ENCODE measurements at regions of chr1 and their contacts with region 1.

Region 1: GRCh38 chr1:147890177-147890790 is 12.3 kb upstream of the GJA8 start:
- DNase-seq: peak; percentile 48
- ATAC-seq: peak; percentile 97
- H3K4me3 ChIP-seq: no peak overlapping the region
- H3K27ac ChIP-seq: no peak overlapping the region
- H3K4me1 ChIP-seq: peaks cover 3 to 6% of the 10 kb centered on the region in 2 experiments; a peak in 2 of 4 replicates
- H3K27me3 ChIP-seq: no peaks in the 10 kb centered on the region
- CTCF ChIP-seq: peak; percentile 68 to 84 (median 81)
- POLR2A ChIP-seq: no peak
- RAD21 ChIP-seq: peak; percentile 92

Region 2: DNA sequence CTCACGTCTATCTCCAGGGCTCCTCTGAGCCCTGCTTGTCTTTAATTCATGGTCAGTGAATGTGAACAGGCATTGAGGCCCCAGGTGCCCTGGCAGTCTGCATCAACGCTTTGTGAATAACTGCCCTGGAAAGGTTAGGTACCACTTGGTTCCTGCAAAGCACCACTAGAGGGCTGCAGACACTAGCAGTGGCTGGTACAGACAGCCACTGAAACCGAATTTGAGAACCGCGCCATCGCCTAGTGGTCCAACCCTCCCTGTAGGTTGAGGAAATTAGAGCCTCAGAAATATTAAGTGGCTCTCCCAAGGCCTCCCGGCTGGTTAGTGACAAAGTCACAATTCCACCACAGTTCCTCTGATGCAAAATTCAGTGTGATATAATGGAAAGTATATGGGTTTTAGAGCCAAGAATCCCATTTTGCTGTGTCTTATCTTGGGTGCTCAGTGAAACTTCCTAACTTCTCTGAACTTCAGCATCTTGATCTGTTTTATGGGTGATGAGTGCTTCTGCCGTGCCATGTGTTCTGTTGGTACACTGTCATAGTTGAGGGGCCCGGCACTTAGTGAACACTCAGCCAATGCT is 395.2 kb before region 1 on chr1:
- CTCF ChIA-PET with region 1: interaction called, 11 read pairs
- POLR2A ChIA-PET with region 1: no interaction called
- RAD21 ChIA-PET with region 1: interaction called in 1 of 2 experiments, 4 read pairs
- intact Hi-C with region 1: loop called (anchors 1 kb)
- DNase-seq: peak; percentile 72
- ATAC-seq: peak; percentile 99
- H3K4me3 ChIP-seq: no peak overlapping the region
- H3K27ac ChIP-seq: no peak overlapping the region
- H3K4me1 ChIP-seq: no peaks in the 10 kb centered on the region; a peak in 1 of 4 replicates
- H3K27me3 ChIP-seq: no peaks in the 10 kb centered on the region
- CTCF ChIP-seq: peak; percentile 83 to 95 (median 94)
- POLR2A ChIP-seq: no peak
- RAD21 ChIP-seq: peak; percentile 94

Region 3: DNA sequence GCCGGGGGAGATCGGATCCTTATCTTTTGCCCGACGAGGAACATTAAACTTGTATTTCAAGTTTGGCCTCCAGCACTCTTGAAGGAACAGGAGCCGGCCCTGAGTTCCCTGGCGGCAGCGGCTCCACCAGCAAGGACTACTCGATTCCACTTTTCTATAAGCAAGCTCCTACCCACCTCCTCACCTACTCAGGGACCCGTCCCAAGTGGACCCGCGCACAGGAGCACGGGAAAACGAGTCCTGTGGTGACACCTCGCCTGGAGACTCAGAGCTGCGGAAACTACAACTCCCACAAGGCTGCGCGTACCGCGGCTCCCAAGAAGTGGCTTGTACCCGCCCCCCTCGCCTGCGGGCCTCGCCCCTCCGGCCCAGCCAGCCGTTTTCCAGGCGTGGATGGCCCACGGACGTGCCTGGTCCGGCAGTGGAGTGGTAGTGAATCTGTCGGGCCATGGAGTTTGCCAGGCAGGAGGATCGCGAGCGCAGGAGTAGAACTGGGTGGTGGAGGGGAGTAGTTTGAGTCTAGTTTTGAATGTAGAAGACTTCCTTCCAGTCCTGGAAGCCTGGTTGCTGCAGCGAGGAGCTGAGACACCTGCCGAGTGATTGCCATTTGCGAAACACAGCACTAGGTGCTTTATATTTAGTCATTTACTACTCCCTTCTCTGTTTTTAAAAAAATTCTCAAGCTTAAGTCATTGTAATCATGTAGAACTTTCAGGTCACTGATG is 219.8 kb before region 1 on chr1 and contains the start of gene ACP6:
- CTCF ChIA-PET with region 1: interaction called, 11 read pairs
- POLR2A ChIA-PET with region 1: no interaction called
- RAD21 ChIA-PET with region 1: interaction called in 1 of 2 experiments, 5 read pairs
- intact Hi-C with region 1: no loop called
- DNase-seq: peak; percentile 93
- ATAC-seq: peak; percentile 94
- H3K4me3 ChIP-seq: peak within 1 kb of the TSS; percentile 66 to 80
- H3K27ac ChIP-seq: peak within 1 kb of the TSS; percentile 84
- H3K4me1 ChIP-seq: peaks cover 3 to 11% of the 10 kb centered on the region in 2 experiments; a peak in 2 of 4 replicates
- H3K27me3 ChIP-seq: no peaks in the 10 kb centered on the region
- CTCF ChIP-seq: no peak
- POLR2A ChIP-seq: peak; percentile 81
- RAD21 ChIP-seq: no peak
- total RNA-seq, gene ACP6: 26.4 TPM

Region 4: DNA sequence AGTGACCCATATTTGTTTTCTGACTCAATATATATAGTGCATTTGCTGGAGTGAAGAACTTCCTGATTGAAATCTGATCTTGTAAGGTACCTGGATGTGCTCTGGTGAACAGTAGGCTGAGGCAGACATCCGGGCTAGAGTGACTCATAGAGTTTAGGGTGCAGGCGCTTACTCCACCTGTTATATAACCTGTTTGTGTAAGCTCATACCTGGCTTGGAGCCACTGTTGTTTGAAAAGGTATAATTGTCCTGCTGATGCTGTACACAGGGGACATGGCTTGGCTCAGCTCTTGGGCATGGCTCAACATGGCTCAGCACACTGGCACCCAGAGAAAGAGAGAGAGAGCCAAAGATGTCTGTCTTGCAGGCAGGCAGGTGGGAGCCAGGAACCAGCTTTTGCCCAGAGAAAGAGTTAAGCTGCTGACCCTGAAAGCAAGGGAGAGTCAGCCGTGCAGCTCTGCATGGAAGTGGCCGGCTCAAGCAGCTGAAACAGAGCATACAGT is 173.2 kb before region 1 on chr1:
- CTCF ChIA-PET with region 1: interaction called, 12 read pairs
- POLR2A ChIA-PET with region 1: no interaction called
- RAD21 ChIA-PET with region 1: no interaction called
- intact Hi-C with region 1: no loop called
- DNase-seq: peak; percentile 78
- ATAC-seq: peak; percentile 92
- H3K4me3 ChIP-seq: no peak overlapping the region
- H3K27ac ChIP-seq: peak overlapping the region; percentile 44
- H3K4me1 ChIP-seq: peaks cover 12 to 18% of the 10 kb centered on the region in 2 experiments
- H3K27me3 ChIP-seq: no peaks in the 10 kb centered on the region
- CTCF ChIP-seq: no peak
- POLR2A ChIP-seq: no peak
- RAD21 ChIP-seq: no peak

Region 5: GRCh38 chr1:147902183-147902845 is 12.0 kb after region 1 on chr1 and contains the start of gene GJA8:
- CTCF ChIA-PET with region 1: interaction called, 17 read pairs
- POLR2A ChIA-PET with region 1: no interaction called
- RAD21 ChIA-PET with region 1: no interaction called
- intact Hi-C with region 1: no loop called
- DNase-seq: no peak
- ATAC-seq: no peak
- H3K4me3 ChIP-seq: no peak within 1 kb of the TSS
- H3K27ac ChIP-seq: no peak within 1 kb of the TSS
- H3K4me1 ChIP-seq: peaks cover 0 to 6% of the 10 kb centered on the region in 2 experiments; a peak in 2 of 4 replicates
- H3K27me3 ChIP-seq: no peaks in the 10 kb centered on the region
- CTCF ChIP-seq: no peak
- POLR2A ChIP-seq: no peak
- RAD21 ChIP-seq: no peak
- total RNA-seq, gene GJA8: not detected